Endothelial cell of umbilical vein (primary cell): ENCODE measurements at regions of chr12 and their contacts with region 1.

Region 1: GRCh38 chr12:79058331-79058730 is 193.8 kb downstream of the SYT1 start:
- DNase-seq: peak; percentile 85
- H3K4me3 ChIP-seq: no peak overlapping the region
- H3K27ac ChIP-seq: peak overlapping the region; percentile 85
- H3K4me1 ChIP-seq: peaks cover 61% of the 10 kb centered on the region
- H3K27me3 ChIP-seq: no peaks in the 10 kb centered on the region
- CTCF ChIP-seq: no peak
- POLR2A ChIP-seq: no peak

Region 2: GRCh38 chr12:78562368-78563205 is 495.7 kb before region 1 on chr12:
- CTCF ChIA-PET with region 1: interaction called, 4 read pairs
- POLR2A ChIA-PET with region 1: no interaction called
- dilution Hi-C with region 1: no loop called
- intact Hi-C with region 1: loop called (anchors 5 kb)
- DNase-seq: peak; percentile 46
- H3K4me3 ChIP-seq: no peak overlapping the region
- H3K27ac ChIP-seq: no peak overlapping the region
- H3K4me1 ChIP-seq: no peaks in the 10 kb centered on the region
- H3K27me3 ChIP-seq: peaks cover 5% of the 10 kb centered on the region in 2 experiments
- CTCF ChIP-seq: peak in 1 of 2 donors; percentile 32
- POLR2A ChIP-seq: no peak

Region 3: GRCh38 chr12:78863482-78864402 is 194.6 kb before region 1 on chr12:
- CTCF ChIA-PET with region 1: no interaction called
- POLR2A ChIA-PET with region 1: no interaction called
- dilution Hi-C with region 1: no loop called
- intact Hi-C with region 1: loop called (anchors 5 kb)
- DNase-seq: peak; percentile 66
- H3K4me3 ChIP-seq: peak overlapping the region; percentile 45 to 91 (median 88)
- H3K27ac ChIP-seq: peak overlapping the region; percentile 69
- H3K4me1 ChIP-seq: peaks cover 9% of the 10 kb centered on the region
- H3K27me3 ChIP-seq: peaks cover 6 to 9% of the 10 kb centered on the region in 2 experiments
- CTCF ChIP-seq: no peak
- POLR2A ChIP-seq: no peak

Region 4: GRCh38 chr12:78888568-78888967 is 169.8 kb before region 1 on chr12:
- CTCF ChIA-PET with region 1: no interaction called
- POLR2A ChIA-PET with region 1: no interaction called
- dilution Hi-C with region 1: no loop called
- intact Hi-C with region 1: loop called (anchors 2 kb)
- DNase-seq: no peak
- H3K4me3 ChIP-seq: no peak overlapping the region
- H3K27ac ChIP-seq: peak overlapping the region; percentile 11
- H3K4me1 ChIP-seq: peaks cover 29% of the 10 kb centered on the region
- H3K27me3 ChIP-seq: no peaks in the 10 kb centered on the region
- CTCF ChIP-seq: no peak
- POLR2A ChIP-seq: no peak

Region 5: DNA sequence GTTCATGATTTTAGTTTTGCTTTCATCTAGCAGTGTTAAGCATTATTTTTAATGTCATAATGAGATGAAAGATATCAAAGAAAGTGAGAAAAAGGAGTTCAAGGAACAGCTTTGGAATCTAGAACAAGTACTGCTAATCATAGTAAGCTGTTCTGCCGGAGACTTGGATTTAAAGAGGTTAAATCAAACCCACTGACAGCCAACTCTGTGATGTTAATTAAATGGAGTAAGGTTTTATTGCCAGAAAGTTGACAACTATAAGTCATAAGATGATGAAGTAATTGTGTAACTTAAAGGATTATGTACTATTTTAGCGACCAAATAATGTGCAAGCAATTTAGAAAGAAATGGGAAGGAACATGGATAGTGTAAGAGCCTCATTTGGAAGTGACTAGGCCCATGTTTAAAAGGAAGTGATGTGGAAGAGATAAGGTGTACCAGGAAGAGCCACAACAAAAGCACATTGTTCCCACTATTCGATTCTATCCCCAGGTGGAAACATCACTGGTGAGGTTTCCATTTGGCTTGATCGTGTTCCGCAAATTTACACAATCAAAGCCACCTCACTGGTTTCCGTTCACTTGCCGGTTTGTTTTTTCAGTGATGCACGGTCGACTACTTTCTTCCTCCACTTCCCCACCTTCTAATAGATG is 244.0 kb after region 1 on chr12:
- CTCF ChIA-PET with region 1: no interaction called
- POLR2A ChIA-PET with region 1: no interaction called
- dilution Hi-C with region 1: no loop called
- intact Hi-C with region 1: loop called (anchors 1 kb)
- DNase-seq: peak; percentile 95
- H3K4me3 ChIP-seq: no peak overlapping the region
- H3K27ac ChIP-seq: peak overlapping the region; percentile 87
- H3K4me1 ChIP-seq: peaks cover 32% of the 10 kb centered on the region
- H3K27me3 ChIP-seq: no peaks in the 10 kb centered on the region
- CTCF ChIP-seq: no peak
- POLR2A ChIP-seq: peak; percentile 86